GM13977 (cell line): ENCODE measurements at regions of chr1 and their contacts with region 1.

Region 1: GRCh38 chr1:242467556-242468145 is 56.8 kb downstream of the PLD5 start:
- DNase-seq: peak; percentile 34
- CTCF ChIP-seq: peak; percentile 50

Region 2: GRCh38 chr1:243312952-243313634 is 845.4 kb after region 1 on chr1:
- in situ Hi-C with region 1: loop called (anchors 25 kb)
- DNase-seq: peak; percentile 16
- CTCF ChIP-seq: no peak